Left cardiac atrium (tissue), 4 donors: ENCODE measurements at regions of chr15 and their contacts with region 1.

Region 1: DNA sequence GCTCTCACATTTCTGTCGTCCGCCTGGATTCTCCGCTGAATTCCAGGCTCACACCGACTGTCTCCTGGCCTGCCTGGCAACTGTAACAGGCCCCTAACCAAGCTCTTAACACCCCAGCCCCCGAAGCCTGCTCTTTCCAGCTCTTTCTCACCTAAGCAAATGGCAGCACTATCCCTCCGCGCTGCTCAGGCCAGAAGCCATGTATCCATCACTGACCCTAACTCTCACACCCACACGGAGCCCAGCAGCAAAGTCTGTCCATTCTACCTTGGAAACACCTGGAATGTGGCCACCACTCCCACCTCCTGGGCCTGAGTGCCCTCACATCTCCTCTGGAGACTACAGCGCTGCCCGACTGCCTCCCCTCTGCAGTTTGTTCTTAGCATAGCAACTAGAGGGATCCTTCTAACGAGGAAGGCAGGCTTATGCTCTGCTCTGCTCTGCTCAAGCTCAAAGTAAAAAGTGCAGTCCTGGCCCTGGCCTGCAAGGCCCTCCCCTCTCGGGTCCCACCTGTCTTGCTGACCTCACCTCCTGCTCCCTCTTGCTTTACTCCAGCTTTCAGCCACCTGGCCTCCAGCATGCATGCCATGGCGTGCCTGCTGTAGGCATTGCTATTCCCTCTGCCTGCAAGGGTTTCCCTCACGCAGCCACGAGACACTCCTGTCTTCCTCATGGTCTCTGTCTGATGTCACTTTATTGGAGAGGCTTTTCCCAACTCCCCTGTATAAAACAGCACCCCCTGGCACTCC is 27.2 kb downstream of the FEM1B start:
- DNase-seq: no peak
- ATAC-seq: no peak

Region 2: DNA sequence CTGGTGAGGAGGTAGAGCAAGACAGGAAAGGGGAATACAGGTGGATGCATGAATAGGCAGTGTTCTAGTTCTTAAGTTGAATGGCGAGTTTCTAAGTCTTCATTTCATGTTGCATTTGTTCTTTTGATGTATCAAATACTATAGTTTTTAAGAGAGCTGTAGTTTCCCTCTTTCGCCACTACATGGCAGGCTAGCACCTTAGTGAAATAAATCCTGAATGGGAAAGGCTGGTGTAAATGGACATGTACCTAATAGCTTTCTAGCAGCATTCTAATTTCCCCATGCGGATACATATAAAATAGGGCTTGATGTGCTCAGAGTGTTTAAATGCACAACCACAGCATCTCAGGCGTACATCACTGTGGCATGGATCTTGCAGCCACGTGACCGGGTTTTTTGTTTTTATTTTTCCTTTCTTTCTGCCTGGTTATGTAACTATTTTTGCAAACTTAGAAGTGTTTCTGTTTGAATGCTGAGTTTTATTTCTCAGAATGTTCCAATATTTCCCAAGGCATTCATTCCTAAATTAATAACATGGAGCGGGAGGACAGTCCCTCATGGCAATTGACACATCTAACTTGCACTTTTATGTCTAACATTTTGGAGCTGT is 51.7 kb before region 1 on chr15:
- intact Hi-C with region 1: loop called (anchors 2 to 10 kb)
- DNase-seq: peak; percentile 24
- ATAC-seq: peak in 1 of 2 donors; percentile 19

Region 3: DNA sequence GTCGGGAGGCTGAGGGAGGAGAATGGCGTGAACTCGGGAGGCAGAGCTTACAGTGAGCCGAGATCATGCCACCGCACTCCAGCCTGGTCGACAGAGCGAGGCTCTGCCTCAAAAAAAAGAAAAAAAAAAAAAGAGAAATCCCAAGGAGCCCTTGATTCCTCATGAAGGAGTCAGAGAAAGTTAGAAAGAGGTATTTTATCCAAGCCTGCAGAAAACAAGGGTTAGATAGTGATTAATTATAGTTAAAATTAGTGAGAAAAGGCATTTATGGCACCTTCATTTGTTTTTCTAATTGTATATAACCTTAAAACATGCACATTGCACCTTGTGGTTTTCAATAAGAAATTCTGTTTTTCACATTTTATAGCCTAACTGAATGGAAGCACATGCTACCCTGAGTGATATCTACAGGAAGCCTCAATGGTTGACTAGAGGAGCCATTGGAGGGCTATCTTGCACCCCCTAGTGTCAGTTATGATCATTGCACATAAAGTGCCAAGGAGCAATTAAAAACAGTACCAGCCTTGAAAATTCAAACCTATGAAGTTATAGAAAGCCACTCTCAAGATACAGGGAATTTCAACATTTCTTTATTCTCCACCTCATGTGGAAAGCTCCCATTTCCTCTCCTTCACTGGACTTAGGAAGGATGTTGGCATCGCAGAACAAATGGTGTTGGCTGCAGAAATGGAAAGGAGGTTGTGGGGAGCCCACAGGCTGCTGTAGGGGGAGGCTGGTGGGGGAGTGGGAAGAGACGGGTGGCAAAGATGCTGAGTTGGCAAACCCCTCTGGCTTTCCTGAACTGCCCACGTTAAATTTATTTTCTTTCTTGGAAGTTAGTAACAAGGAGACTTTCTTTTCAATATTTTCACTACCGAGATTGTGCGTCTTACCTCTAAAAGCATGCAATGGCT is 78.7 kb after region 1 on chr15:
- intact Hi-C with region 1: loop called (anchors 2 to 5 kb)
- DNase-seq: no peak
- ATAC-seq: peak; percentile 32 to 41

Region 4: GRCh38 chr15:68503791-68504680 is 199.3 kb after region 1 on chr15:
- intact Hi-C with region 1: no loop called
- DNase-seq: no peak
- ATAC-seq: peak; percentile 12 to 34

Region 5: DNA sequence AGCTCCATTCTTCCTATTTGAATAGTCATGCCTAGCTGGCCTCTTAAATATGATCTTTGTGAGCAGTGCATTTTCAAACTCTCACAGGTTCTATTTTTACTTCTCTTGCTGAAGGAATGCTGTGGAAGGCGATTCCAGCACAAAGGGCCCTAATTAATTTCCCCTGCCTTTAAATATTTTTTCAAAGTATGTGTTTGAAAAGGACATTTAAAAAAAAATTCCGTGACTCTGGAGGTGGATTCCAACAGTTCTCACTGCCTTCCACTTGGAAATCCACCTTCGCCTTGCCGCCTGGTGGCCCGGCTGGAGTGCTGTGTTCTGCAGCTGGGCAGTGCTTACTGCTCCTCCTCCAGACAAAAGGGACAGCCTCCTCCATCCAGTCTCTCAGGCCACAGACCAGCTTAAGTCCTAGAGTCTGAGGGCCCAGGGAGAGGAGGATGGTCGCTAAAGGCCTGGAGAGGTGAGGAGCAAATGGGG is 212.6 kb after region 1 on chr15:
- intact Hi-C with region 1: loop called in 1 of 2 experiments (anchors 10 kb)
- DNase-seq: peak; percentile 37
- ATAC-seq: peak; percentile 82 to 87

Region 6: DNA sequence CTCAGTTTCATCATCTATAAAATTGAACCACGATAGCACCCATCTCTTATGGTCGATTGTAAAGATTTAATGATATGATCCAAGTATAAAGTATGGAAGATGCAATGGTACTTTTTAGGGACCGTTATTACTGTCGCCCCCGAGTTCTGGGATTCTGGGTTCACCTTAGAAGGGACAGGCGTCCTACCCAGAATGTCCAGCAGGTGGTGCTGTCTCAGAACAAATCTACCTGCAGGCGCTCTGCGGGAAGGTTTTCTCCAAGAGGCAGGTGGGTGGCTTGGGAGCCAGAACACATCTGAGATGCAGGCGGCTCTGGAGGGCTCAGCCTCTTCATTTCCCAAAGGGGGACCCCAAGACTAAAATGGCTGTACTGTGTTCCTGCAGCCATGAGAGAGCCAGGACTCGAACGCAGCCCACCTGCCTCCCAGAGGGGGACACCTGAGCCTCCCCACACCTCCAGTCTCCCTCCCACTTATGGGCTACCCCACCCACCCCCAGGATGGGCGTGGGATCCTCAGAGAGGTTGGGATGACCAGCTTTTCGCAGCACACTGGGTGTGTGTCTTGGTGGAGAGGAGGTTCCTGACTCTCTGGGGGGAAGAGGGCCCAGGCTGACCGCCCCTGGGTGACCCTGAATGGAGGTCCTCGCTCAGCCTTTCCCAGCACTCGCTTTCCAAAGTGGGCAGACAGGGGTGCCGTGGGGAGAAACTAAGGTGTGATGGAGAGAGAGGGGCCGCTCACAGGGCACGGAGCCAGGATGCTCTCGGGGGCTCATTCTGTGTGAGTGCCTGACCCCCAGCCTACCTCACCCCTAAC is 245.9 kb after region 1 on chr15:
- intact Hi-C with region 1: loop called (anchors 5 to 10 kb)
- DNase-seq: peak; percentile 80
- ATAC-seq: peak in 1 of 2 donors; percentile 15

Region 7: DNA sequence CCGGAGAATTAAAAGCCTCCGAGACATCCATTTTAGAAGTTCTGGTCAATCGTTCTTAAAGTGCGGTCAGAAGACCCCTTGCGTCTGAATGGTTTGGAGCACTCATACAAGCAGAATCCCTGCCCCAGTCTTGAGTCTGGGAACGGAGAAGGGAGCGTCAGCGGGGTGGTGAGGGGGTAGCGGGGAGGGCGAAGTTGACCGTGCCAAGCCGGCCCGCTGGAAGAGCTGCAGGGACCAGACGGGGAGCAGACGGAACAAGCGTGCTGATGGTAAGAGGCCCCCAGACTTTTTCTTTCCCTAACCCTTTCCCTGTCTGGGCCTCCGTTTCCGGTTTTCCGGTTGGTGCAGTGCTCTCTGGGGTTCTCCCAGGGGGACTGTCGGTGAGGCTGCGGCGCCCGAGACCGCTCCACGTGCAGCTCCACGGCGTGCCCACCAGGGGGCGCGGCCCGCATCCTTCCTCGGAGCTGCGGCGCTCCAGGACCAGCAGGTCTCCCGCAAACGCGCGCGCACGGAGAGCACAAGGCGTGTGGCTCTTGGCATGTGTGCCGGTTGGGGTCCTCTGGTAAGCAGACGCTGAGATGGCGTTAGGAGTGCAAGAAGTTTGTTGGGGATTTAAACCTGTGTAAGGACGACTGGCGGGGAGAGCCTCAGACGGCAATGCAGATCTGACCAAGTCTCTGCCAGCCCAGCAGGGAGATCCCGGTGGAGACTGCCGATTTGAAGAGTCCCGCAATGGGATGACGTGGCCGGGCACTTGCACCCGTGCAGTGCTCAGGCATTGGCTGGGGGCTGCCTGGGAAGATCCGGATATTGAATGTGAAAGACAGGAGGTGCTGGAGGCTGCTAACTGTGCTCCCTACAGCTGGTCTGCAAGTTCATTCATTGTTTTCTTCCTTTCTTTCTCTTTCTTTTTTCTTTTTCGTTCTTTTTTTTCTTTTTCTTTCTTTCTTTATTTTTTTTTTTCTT is 254.9 kb after region 1 on chr15:
- intact Hi-C with region 1: loop called (anchors 5 to 10 kb)
- DNase-seq: peak; percentile 83
- ATAC-seq: peak; percentile 95